Testis (tissue), 5 donors: ENCODE measurements at regions of chr9 and their contacts with region 1.

Region 1: DNA sequence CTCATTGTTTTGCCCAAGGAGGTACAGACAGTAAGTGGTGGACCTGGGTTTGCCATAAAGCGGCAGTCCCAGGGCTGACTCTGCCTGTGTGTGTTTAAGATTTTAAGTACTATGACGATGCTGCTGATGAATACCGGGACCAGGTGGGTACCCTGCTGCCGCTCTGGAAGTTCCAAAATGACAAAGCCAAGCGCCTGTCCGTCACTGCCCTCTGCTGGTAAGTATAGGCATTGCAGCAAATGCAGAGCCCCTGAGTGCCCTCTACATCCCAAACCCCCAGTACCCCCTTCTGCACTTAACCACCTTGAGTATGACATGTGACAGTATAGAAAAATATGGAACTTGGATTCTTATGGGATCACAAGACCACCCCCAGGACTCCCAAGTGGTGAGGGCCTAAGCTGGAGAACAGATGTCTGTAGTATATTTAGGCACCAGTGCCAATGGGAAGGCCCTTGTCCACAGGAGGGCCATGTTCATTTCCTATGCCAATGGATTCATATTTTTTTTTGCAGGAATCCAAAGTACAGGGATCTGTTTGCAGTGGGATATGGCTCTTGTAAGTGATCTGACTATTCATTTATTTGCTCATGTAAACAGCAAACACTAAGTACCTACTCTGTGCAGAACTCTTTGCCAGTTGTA is 22.0 kb downstream of the ENHO start:
- DNase-seq: peak; percentile 68
- H3K4me3 ChIP-seq: no peak overlapping the region
- H3K27ac ChIP-seq: no peak overlapping the region
- H3K4me1 ChIP-seq: peaks cover 25% of the 10 kb centered on the region
- H3K27me3 ChIP-seq: no peaks in the 10 kb centered on the region
- CTCF ChIP-seq: peak; percentile 86 to 98 (median 86)
- POLR2A ChIP-seq: no peak

Region 2: GRCh38 chr9:34403554-34404380 is 97.0 kb before region 1 on chr9:
- intact Hi-C with region 1: loop called (anchors 10 kb)
- DNase-seq: peak; percentile 88
- H3K4me3 ChIP-seq: no peak overlapping the region
- H3K27ac ChIP-seq: no peak overlapping the region
- H3K4me1 ChIP-seq: no peaks in the 10 kb centered on the region
- H3K27me3 ChIP-seq: no peaks in the 10 kb centered on the region
- CTCF ChIP-seq: peak; percentile 92 to 98 (median 94)
- POLR2A ChIP-seq: no peak